K562 (cell line): ENCODE measurements at regions of chr3 and their contacts with region 1.

Region 1: DNA sequence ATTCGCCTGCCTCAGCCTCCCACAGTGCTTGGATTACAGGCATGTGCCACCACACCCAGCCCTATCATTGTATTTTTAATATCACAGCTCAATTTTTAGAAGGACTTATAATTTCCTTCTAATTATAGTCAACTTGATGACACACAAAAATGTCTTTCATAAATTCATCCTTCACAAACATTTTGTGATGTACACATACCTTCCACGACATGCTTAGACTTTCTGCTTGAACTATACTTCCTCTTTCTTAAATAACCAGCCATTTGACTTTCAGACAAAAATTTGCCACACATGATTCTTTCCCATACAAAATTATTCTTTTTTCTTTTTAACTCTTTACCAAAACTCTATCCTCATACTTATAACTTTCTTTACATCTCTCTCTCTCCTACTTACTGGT is 48.4 kb upstream of the CCK start:
- DNase-seq: no peak
- ATAC-seq: no peak
- H3K4me3 ChIP-seq: no peak overlapping the region
- H3K27ac ChIP-seq: no peak overlapping the region
- H3K4me1 ChIP-seq: no peaks in the 10 kb centered on the region
- H3K27me3 ChIP-seq: no peaks in the 10 kb centered on the region
- CTCF ChIP-seq: no peak
- EP300 ChIP-seq: no peak
- POLR2A ChIP-seq: no peak
- RAD21 ChIP-seq: no peak

Region 2: GRCh38 chr3:42102571-42102970 is 211.8 kb before region 1 on chr3:
- CTCF ChIA-PET with region 1: no interaction called
- POLR2A ChIA-PET with region 1: no interaction called
- in situ Hi-C with region 1: no loop called
- intact Hi-C with region 1: no loop called
- DNase-seq: no peak
- ATAC-seq: no peak
- H3K4me3 ChIP-seq: no peak overlapping the region
- H3K27ac ChIP-seq: no peak overlapping the region
- H3K4me1 ChIP-seq: peaks cover 0 to 4% of the 10 kb centered on the region in 2 experiments; a peak in 1 of 5 replicates
- H3K27me3 ChIP-seq: no peaks in the 10 kb centered on the region
- CTCF ChIP-seq: no peak
- EP300 ChIP-seq: no peak
- POLR2A ChIP-seq: no peak
- RAD21 ChIP-seq: no peak

Region 3: DNA sequence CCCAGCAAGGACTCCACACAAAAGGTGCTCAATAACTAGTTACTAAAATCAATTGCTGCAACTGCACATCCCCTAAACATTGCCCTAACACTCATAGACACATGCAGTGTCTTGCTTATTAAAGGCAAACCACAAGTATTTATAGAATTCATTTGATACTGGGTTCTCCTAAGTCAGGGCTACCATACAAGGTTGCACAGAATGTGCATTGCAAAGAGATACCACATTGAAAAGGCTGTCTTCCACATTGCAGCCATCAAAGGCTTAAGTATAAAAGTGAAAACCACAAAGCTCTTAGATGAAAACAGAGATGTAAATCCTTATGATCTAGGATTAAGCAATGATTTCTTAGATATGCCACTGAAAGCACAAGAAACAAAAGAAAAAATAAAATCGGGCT is 1893.7 kb after region 1 on chr3:
- CTCF ChIA-PET with region 1: no interaction called
- POLR2A ChIA-PET with region 1: no interaction called
- in situ Hi-C with region 1: loop called (anchors 10 kb)
- intact Hi-C with region 1: no loop called
- DNase-seq: no peak
- ATAC-seq: no peak
- H3K4me3 ChIP-seq: no peak overlapping the region
- H3K27ac ChIP-seq: no peak overlapping the region
- H3K4me1 ChIP-seq: peaks cover 0 to 8% of the 10 kb centered on the region in 2 experiments; a peak in 2 of 5 replicates
- H3K27me3 ChIP-seq: no peaks in the 10 kb centered on the region; a peak in 1 of 5 replicates
- CTCF ChIP-seq: no peak
- EP300 ChIP-seq: no peak
- POLR2A ChIP-seq: no peak
- RAD21 ChIP-seq: no peak